GM12878 (cell line): ENCODE measurements at regions of chr22 and their contacts with region 1.

Region 1: DNA sequence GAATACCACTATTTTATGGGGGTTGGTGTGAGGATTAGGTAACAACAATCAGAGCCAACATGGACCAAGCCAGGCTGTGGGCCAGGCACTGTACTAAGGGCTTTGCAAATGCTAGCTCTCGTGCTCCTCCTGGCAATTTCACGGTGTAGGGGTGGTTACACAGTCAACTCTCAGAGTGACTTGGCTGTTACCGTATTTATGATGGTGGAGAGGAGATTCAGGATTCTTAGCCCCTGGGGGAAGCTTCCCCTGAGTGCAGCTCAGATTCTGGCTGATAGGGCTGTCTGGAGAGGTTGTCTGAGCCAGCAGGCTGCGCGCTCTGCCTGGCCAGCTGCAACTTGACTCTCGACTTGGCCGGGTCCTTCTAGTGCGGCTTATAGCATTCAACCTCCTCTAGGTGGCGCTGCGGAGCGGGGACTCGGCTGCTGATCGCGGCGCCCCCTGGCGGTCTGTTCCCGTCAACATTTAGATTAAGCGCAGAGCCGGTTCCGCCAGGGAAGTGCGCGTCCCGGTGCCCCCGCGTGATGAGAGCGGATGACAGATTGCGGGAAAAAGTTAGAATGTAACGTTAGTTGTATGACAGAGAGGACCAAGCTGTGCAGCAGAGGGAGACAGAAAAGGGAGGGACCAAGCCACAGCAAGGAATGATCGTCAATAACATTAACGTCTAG is 4.5 kb upstream of the NCF4 start:
- DNase-seq: no peak
- ATAC-seq: peak; percentile 55
- H3K4me3 ChIP-seq: no peak overlapping the region
- H3K27ac ChIP-seq: no peak overlapping the region
- H3K4me1 ChIP-seq: peaks cover 41% of the 10 kb centered on the region
- H3K27me3 ChIP-seq: no peaks in the 10 kb centered on the region
- CTCF ChIP-seq: peak; percentile 100; a peak in 5 of 6 replicates
- EP300 ChIP-seq: no peak
- POLR2A ChIP-seq: no peak
- RAD21 ChIP-seq: peak; percentile 90

Region 2: GRCh38 chr22:36546092-36546804 is 310.0 kb before region 1 on chr22:
- CTCF ChIA-PET with region 1: interaction called, 11 read pairs
- POLR2A ChIA-PET with region 1: no interaction called
- RAD21 ChIA-PET with region 1: no interaction called
- SMC1A ChIA-PET with region 1: no interaction called
- in situ Hi-C with region 1: loop called (anchors 5 kb)
- intact Hi-C with region 1: loop called (anchors 5 kb)
- DNase-seq: no peak
- ATAC-seq: peak; percentile 73
- H3K4me3 ChIP-seq: no peak overlapping the region
- H3K27ac ChIP-seq: no peak overlapping the region
- H3K4me1 ChIP-seq: no peaks in the 10 kb centered on the region
- H3K27me3 ChIP-seq: no peaks in the 10 kb centered on the region
- CTCF ChIP-seq: peak; percentile 42 to 54 (median 53); a peak in 5 of 6 replicates
- EP300 ChIP-seq: no peak
- POLR2A ChIP-seq: no peak
- RAD21 ChIP-seq: peak; percentile 60

Region 3: GRCh38 chr22:36839356-36840073 is 16.7 kb before region 1 on chr22:
- CTCF ChIA-PET with region 1: interaction called, 16 read pairs
- POLR2A ChIA-PET with region 1: no interaction called
- RAD21 ChIA-PET with region 1: no interaction called
- SMC1A ChIA-PET with region 1: no interaction called
- in situ Hi-C with region 1: no loop called
- intact Hi-C with region 1: no loop called
- DNase-seq: no peak
- ATAC-seq: peak; percentile 48; the same call in 2 of the 3 replicates
- H3K4me3 ChIP-seq: no peak overlapping the region
- H3K27ac ChIP-seq: no peak overlapping the region
- H3K4me1 ChIP-seq: no peaks in the 10 kb centered on the region; the same call in 1 of the 2 replicates
- H3K27me3 ChIP-seq: no peaks in the 10 kb centered on the region; a peak in 1 of 4 replicates
- CTCF ChIP-seq: no peak
- EP300 ChIP-seq: no peak
- POLR2A ChIP-seq: no peak
- RAD21 ChIP-seq: no peak

Region 4: DNA sequence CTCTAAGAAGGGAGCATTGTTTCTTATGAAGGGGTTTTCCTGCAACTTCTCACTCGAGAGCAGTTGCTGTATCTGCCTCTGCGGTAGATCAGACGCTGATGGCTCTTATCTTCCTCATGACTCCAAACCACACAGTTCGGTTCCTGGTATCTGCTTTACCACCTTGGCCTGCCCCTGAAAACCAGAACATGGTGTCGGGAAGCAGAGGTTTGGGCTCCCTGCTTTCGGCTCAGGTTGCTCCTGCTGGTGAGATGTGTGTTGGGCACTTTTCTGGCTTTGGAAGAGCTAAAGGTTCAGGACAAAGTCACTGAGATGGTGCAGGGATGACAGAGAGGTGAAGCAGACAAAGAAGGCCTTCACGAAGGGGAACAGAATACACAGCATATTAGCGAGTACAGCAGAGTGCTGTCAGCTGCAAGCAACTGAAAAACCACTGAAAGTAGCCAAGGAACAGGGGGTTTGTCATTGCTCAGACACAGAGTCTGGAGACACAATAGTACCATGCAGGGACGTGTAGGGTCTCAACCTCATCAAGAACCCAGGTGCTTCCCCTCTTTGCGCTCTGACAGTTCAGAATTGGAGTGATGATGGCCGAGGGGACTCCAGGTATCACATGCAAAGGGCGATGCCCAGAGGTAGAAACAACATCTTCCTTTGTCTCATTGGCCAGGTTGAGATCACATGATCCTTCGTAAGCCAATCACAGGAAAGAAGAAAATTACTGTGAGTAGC is 45.3 kb after region 1 on chr22:
- CTCF ChIA-PET with region 1: interaction called, 26 read pairs
- POLR2A ChIA-PET with region 1: interaction called, 51 read pairs
- RAD21 ChIA-PET with region 1: interaction called, 78 read pairs
- SMC1A ChIA-PET with region 1: interaction called, 72 read pairs
- in situ Hi-C with region 1: no loop called
- intact Hi-C with region 1: loop called (anchors 1 kb)
- DNase-seq: peak; percentile 90
- ATAC-seq: peak; percentile 85
- H3K4me3 ChIP-seq: peak overlapping the region; percentile 35; the same call in 1 of the 2 replicates
- H3K27ac ChIP-seq: peak overlapping the region; percentile 80
- H3K4me1 ChIP-seq: peaks cover 33% of the 10 kb centered on the region
- H3K27me3 ChIP-seq: no peaks in the 10 kb centered on the region
- CTCF ChIP-seq: 0 out of 6 replicates have a peak, but pooled peaks of 1 of the 3 experiments have one; percentile 3
- EP300 ChIP-seq: peak; percentile 60 to 84
- POLR2A ChIP-seq: 0 out of 2 replicates have a peak, but pooled peaks have one; percentile 22
- RAD21 ChIP-seq: no peak

Region 5: GRCh38 chr22:36921309-36922104 is 65.3 kb after region 1 on chr22:
- CTCF ChIA-PET with region 1: interaction called, 73 read pairs
- POLR2A ChIA-PET with region 1: interaction called, 33 read pairs
- RAD21 ChIA-PET with region 1: interaction called, 27 read pairs
- SMC1A ChIA-PET with region 1: interaction called, 19 read pairs
- in situ Hi-C with region 1: no loop called
- intact Hi-C with region 1: loop called (anchors 1 kb)
- DNase-seq: peak; percentile 69
- ATAC-seq: peak; percentile 92
- H3K4me3 ChIP-seq: 0 out of 2 replicates have a peak overlapping the region, but pooled peaks have one; percentile 0
- H3K27ac ChIP-seq: peak overlapping the region; percentile 76
- H3K4me1 ChIP-seq: peaks cover 20% of the 10 kb centered on the region
- H3K27me3 ChIP-seq: no peaks in the 10 kb centered on the region
- CTCF ChIP-seq: no peak
- EP300 ChIP-seq: peak; percentile 14 to 73; a peak in 3 of 4 replicates
- POLR2A ChIP-seq: no peak
- RAD21 ChIP-seq: 0 out of 2 replicates have a peak, but pooled peaks have one; percentile 4

Region 6: DNA sequence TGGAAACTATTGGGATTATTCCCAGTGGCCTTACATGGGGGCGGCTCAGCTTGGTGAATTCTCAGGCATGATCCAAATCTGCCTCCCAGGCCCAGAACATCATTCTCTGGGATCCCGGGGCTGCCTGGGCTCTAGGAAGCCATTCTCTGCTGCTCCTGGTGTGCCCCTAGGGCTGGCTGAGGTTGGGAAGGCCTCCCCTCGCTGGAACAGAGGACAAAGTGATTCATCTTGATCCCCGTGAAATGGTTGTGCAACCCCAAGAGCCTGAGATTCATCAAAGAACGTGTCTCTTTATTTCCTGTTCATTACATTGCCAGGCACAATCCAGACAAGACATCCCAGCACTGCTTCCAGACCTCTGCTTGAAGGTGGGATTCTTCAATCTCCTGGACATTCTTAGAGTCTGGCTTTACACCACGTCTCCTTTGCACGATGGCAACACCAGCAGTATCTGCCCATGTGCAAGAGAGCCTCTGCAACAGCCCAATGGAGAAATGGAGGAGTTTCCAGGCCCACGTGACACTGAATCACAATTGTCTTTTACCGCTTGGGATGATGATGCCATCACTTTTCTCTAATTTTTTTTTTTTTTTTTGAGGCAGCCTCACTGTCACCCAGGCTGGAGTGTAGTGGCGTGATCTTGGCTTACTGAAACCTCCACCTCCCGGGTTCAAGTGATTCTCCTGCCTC is 110.7 kb after region 1 on chr22:
- CTCF ChIA-PET with region 1: interaction called, 310 read pairs
- POLR2A ChIA-PET with region 1: no interaction called
- RAD21 ChIA-PET with region 1: interaction called, 3 read pairs
- SMC1A ChIA-PET with region 1: interaction called, 3 read pairs
- in situ Hi-C with region 1: no loop called
- intact Hi-C with region 1: no loop called
- DNase-seq: no peak
- ATAC-seq: no peak
- H3K4me3 ChIP-seq: no peak overlapping the region
- H3K27ac ChIP-seq: no peak overlapping the region
- H3K4me1 ChIP-seq: no peaks in the 10 kb centered on the region
- H3K27me3 ChIP-seq: no peaks in the 10 kb centered on the region
- CTCF ChIP-seq: no peak
- EP300 ChIP-seq: no peak
- POLR2A ChIP-seq: no peak
- RAD21 ChIP-seq: no peak

Region 7: GRCh38 chr22:37166675-37167066 is 310.4 kb after region 1 on chr22:
- CTCF ChIA-PET with region 1: interaction called, 6 read pairs
- POLR2A ChIA-PET with region 1: no interaction called
- RAD21 ChIA-PET with region 1: interaction called, 5 read pairs
- SMC1A ChIA-PET with region 1: no interaction called
- in situ Hi-C with region 1: no loop called
- intact Hi-C with region 1: loop called (anchors 5 kb)
- DNase-seq: no peak
- ATAC-seq: peak; percentile 21
- H3K4me3 ChIP-seq: no peak overlapping the region; the same call in 1 of the 2 replicates
- H3K27ac ChIP-seq: no peak overlapping the region; the same call in 1 of the 2 replicates
- H3K4me1 ChIP-seq: peaks cover 62% of the 10 kb centered on the region
- H3K27me3 ChIP-seq: no peaks in the 10 kb centered on the region
- CTCF ChIP-seq: peak in 2 of 3 experiments; percentile 87 to 92; a peak in 5 of 6 replicates
- EP300 ChIP-seq: no peak
- POLR2A ChIP-seq: no peak
- RAD21 ChIP-seq: peak; percentile 77